Transverse colon (tissue), 4 donors: ENCODE measurements at regions of chr12 and their contacts with region 1.

Region 1: GRCh38 chr12:52756281-52756960 is 20.7 kb downstream of the KRT76 start:
- DNase-seq: no peak
- H3K4me3 ChIP-seq: no peak overlapping the region
- H3K27ac ChIP-seq: no peak overlapping the region
- H3K4me1 ChIP-seq: no peaks in the 10 kb centered on the region
- H3K27me3 ChIP-seq: peaks cover 12% of the 10 kb centered on the region
- CTCF ChIP-seq: no peak
- EP300 ChIP-seq: no peak
- POLR2A ChIP-seq: no peak

Region 2: GRCh38 chr12:52243856-52244614 is 512.4 kb before region 1 on chr12:
- in situ Hi-C with region 1: no loop called
- intact Hi-C with region 1: no loop called
- DNase-seq: peak; percentile 58
- H3K4me3 ChIP-seq: no peak overlapping the region
- H3K27ac ChIP-seq: peak overlapping the region; percentile 4 to 61 (median 32)
- H3K4me1 ChIP-seq: peaks cover 11 to 28% (median 16%) of the 10 kb centered on the region in 4 donors
- H3K27me3 ChIP-seq: peaks cover 2% of the 10 kb centered on the region
- CTCF ChIP-seq: no peak
- EP300 ChIP-seq: no peak
- POLR2A ChIP-seq: no peak

Region 3: DNA sequence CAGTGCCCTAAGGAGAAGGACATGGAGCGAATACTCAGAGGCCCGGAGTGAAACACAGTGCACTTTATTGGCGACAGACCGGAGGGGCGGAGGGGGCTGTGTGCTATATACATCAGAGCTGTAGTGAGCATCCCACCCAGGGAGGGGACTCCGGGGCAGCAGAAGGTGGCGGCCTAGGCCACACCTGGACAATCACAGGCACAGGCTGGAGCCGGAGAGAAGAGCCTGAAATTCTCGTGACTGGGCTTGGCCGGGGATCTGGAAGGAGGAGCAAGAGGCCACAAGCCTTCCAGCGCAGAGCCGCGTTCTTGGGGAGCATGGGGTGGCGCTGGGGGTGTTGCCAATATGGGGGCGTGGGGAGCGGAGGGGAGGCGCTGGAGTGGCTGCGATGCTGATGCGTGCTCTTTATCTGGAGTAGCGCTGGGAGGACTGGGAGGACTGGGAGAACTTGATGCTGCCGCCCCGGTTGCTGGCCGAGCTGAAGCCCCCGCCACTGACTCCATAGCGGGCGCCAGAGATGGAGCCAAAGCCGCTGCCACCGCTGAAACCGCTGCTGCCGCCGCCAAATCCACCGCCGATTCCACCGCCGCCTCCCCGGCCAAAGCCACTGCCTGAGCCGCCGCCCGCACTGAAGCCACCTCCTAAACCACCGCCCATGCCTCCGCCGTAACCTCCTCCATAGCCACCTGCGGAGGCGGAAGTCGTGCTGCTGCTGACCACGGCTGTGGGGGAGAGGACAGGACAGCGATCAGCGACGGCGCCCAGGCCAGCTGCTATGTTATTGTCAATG is 33.4 kb after region 1 on chr12:
- in situ Hi-C with region 1: no loop called
- intact Hi-C with region 1: loop called (anchors 1 kb)
- DNase-seq: peak; percentile 51
- H3K4me3 ChIP-seq: no peak overlapping the region
- H3K27ac ChIP-seq: no peak overlapping the region
- H3K4me1 ChIP-seq: peaks cover 0 to 7% (median 2%) of the 10 kb centered on the region in 4 donors
- H3K27me3 ChIP-seq: peaks cover 9% of the 10 kb centered on the region
- CTCF ChIP-seq: no peak
- EP300 ChIP-seq: no peak
- POLR2A ChIP-seq: no peak

Region 4: DNA sequence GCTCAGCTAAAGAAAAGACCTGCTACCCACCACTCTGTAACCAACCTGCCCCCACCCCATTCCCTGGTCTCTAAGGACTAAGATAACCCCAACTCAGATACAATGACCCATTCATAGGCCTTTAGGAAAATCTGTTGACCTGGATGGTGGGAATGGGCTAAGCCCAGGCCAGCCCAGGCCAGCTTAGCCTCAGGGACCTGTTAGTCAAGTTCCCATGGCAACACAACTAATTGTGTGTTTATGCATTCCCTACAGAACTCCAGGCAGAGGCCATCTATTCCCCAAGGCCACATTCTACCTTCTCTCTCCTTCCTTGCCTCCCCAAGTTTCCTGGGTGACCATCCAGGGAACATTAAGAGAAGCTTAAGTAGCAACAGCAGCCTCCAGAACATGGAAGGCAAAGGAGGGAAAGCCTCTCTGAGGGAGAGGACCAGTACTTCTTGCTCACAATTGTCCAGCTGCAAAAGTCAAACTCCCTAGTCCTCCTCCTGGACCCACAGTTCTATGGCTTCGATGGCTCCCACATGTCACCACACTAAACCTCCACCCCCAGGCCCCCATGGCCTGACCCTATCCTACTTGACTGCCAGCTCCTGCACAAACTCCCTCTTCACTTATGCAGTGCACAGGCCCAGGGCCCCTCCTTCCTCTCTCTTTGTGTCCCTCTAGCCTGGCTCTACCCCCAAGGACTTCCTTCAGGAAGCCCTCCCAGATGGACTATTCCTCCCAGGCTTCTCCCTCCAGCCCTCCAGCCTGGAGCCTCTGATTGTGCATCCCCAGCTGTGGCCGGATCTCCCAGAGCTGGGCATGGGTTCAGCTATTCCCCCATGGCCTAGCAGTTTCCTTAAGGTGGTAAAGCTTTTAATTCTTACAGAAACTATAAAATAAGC is 164.8 kb after region 1 on chr12:
- in situ Hi-C with region 1: no loop called
- intact Hi-C with region 1: no loop called
- DNase-seq: no peak
- H3K4me3 ChIP-seq: no peak overlapping the region
- H3K27ac ChIP-seq: peak overlapping the region in 3 of 4 donors; percentile 40 to 52 (median 52)
- H3K4me1 ChIP-seq: peaks cover 9 to 48% (median 34%) of the 10 kb centered on the region in 4 donors
- H3K27me3 ChIP-seq: no peaks in the 10 kb centered on the region
- CTCF ChIP-seq: no peak
- EP300 ChIP-seq: no peak
- POLR2A ChIP-seq: no peak